Ascending aorta (tissue), 2 donors: ENCODE measurements at regions of chr1 and their contacts with region 1.

Region 1: GRCh38 chr1:226407497-226408284 is at the start of gene PARP1:
- DNase-seq: peak; percentile 74 to 96
- H3K4me3 ChIP-seq: peak within 1 kb of the TSS; percentile 84 to 87
- H3K27ac ChIP-seq: peak within 1 kb of the TSS; percentile 76 to 80
- H3K4me1 ChIP-seq: peaks cover 8 to 22% of the 10 kb centered on the region in 2 donors
- H3K27me3 ChIP-seq: no peaks in the 10 kb centered on the region
- CTCF ChIP-seq: peak; percentile 24 to 82 (median 35)
- total RNA-seq, gene PARP1: 37.1 TPM

Region 2: GRCh38 chr1:226233293-226233692 is 174.4 kb before region 1 on chr1:
- intact Hi-C with region 1: no loop called
- DNase-seq: no peak
- H3K4me3 ChIP-seq: no peak overlapping the region
- H3K27ac ChIP-seq: no peak overlapping the region
- H3K4me1 ChIP-seq: no peaks in the 10 kb centered on the region
- H3K27me3 ChIP-seq: no peaks in the 10 kb centered on the region
- CTCF ChIP-seq: no peak

Region 3: GRCh38 chr1:226365831-226366231 is 41.9 kb before region 1 on chr1:
- intact Hi-C with region 1: loop called (anchors 2 kb)
- DNase-seq: no peak
- H3K4me3 ChIP-seq: no peak overlapping the region
- H3K27ac ChIP-seq: peak overlapping the region in 1 of 2 donors; percentile 81
- H3K4me1 ChIP-seq: peaks cover 0 to 11% of the 10 kb centered on the region in 2 donors
- H3K27me3 ChIP-seq: no peaks in the 10 kb centered on the region
- CTCF ChIP-seq: no peak

Region 4: DNA sequence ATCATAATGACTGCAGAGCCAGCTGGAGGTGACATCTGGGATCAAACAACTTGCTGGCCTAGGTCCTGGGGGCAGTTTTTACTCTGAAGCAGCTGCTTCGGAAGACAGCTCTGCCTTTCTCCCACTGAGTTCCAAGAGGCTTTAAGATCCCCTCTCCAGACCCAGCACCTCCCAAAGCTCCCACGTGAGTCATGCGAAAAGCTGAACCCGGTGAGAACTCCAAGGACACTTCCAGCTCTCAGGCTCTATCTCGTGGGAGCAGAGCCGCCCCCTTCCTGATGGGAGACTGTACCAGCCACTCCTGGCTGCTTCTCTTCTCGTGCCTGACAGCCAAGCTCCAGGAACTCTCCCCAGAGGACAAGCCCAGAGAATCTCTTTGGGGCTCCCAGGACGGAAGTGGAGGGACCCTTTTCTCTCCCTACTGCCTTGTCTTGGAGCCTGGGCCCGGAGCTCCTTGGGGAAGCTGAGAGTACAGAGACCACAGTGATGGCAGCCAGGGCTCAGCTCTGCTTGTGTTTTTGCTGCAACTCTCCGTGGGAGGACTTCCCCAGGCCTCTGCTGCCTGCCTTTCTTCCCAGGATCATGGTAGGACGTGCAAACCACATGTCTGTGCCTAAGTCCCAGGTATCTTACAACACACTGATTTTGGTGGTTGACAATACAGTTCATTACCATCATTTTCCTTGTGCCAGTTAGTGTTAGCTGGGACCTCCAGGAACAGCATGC is 181.5 kb after region 1 on chr1:
- intact Hi-C with region 1: no loop called
- DNase-seq: no peak
- H3K4me3 ChIP-seq: no peak overlapping the region
- H3K27ac ChIP-seq: peak overlapping the region in 1 of 2 donors; percentile 2
- H3K4me1 ChIP-seq: no peaks in the 10 kb centered on the region
- H3K27me3 ChIP-seq: no peaks in the 10 kb centered on the region
- CTCF ChIP-seq: no peak

Region 5: DNA sequence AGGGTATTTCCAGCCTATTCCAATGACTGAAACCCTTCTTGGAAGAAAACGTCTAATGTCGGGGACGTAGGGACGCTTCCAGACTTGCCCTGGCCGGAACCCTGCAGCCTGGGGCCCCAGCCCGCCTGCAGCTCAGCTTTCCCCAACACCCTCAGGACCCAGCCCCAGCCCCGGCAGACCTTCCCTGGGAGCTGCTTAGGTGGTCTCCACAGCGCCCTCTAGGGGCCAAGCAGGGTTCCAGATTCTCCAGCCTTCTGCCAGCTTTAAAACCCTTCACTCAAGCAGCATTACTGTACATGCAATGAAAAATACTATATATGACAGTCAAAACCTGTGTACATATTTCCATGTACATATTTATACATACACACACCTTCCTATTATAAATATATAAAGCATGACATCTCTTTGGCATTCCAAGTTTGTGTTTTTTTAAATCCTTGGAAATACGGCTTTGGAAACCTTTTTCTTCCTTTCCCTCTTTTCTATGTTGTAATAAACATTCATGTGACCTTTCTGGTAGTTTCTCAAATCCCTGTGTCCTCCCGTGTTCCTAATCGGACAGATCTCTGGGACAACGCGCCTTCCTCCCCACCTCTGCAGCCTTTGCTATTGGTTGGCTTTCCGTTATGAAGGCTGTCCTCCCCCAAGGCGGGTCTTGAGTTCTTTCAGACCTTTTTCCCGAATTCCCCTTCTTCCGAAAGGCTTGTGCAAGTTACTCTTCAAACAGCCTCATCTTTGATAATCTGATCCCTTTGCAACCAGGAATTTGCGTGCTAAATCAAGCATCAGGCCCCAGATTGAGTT is 201.2 kb after region 1 on chr1:
- intact Hi-C with region 1: loop called (anchors 10 kb)
- DNase-seq: peak in 1 of 2 donors; percentile 74
- H3K4me3 ChIP-seq: no peak overlapping the region
- H3K27ac ChIP-seq: no peak overlapping the region
- H3K4me1 ChIP-seq: no peaks in the 10 kb centered on the region
- H3K27me3 ChIP-seq: no peaks in the 10 kb centered on the region
- CTCF ChIP-seq: peak; percentile 48 to 79 (median 72)

Region 6: GRCh38 chr1:227728059-227728891 is 1320.6 kb after region 1 on chr1:
- intact Hi-C with region 1: loop called (anchors 5 kb)
- DNase-seq: peak in 1 of 2 donors; percentile 83
- H3K4me3 ChIP-seq: peak overlapping the region; percentile 51 to 71
- H3K27ac ChIP-seq: peak overlapping the region; percentile 67 to 73
- H3K4me1 ChIP-seq: peaks cover 0 to 3% of the 10 kb centered on the region in 2 donors
- H3K27me3 ChIP-seq: no peaks in the 10 kb centered on the region
- CTCF ChIP-seq: no peak